Activated CD4-positive, alpha-beta T cell treated with anti-CD3 and anti-CD28 coated beads for 36 hours (primary cell): ENCODE measurements at regions of chr6 and their contacts with region 1.

Region 1: DNA sequence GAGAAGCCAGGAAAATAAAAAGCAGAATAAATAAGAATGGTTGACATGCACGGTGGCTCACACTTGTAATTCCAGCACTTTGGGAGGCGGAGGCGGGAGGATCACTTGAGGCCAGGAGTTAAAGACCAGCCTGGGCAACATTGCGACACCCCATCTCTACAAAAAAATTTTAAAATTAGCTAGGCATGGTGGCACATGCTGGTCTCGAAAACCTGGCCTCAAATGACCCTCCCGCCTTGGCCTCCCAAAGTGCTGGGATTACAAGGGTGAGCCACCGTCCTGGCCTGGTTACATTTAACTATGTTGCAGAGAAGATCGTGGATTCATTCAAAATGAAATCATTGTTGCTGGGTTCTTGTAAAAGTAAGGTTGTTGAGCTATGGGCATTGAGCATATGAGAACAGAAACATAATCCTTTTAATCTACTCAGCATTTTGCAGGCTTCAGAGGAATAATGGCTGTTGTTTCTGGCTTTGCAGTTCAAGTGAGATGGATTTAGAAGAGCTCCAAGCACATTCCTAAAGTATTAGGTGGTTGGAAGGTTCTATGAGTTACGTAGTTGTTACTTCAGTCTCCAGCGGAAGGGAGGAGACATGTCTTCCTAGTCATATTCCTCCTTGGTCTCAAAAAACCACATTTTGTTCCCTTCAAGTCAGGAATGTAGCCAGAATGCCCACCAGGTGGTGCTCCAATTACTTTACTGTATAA is 45.6 kb upstream of the RAB23 start:
- DNase-seq: peak; percentile 62
- ATAC-seq: peak; percentile 52
- H3K4me3 Mint-ChIP-seq: no peak overlapping the region
- H3K27ac Mint-ChIP-seq: no peak overlapping the region
- H3K4me1 Mint-ChIP-seq: peaks cover 27% of the 10 kb centered on the region
- H3K27me3 Mint-ChIP-seq: peaks cover 14% of the 10 kb centered on the region

Region 2: GRCh38 chr6:57021086-57021720 is 246.5 kb before region 1 on chr6:
- CTCF ChIA-PET with region 1: no interaction called
- POLR2A ChIA-PET with region 1: no interaction called
- intact Hi-C with region 1: no loop called
- DNase-seq: no peak
- ATAC-seq: peak; percentile 39
- H3K4me3 Mint-ChIP-seq: no peak overlapping the region
- H3K27ac Mint-ChIP-seq: no peak overlapping the region
- H3K4me1 Mint-ChIP-seq: no peaks in the 10 kb centered on the region
- H3K27me3 Mint-ChIP-seq: peaks cover 2% of the 10 kb centered on the region

Region 3: GRCh38 chr6:57089687-57090460 is 177.9 kb before region 1 on chr6 and contains the start of gene ZNF451:
- CTCF ChIA-PET with region 1: no interaction called
- POLR2A ChIA-PET with region 1: no interaction called
- intact Hi-C with region 1: no loop called
- DNase-seq: peak; percentile 98
- ATAC-seq: peak; percentile 95
- H3K4me3 Mint-ChIP-seq: peak within 1 kb of the TSS; percentile 73
- H3K27ac Mint-ChIP-seq: peak within 1 kb of the TSS; percentile 82
- H3K4me1 Mint-ChIP-seq: peaks cover 32% of the 10 kb centered on the region
- H3K27me3 Mint-ChIP-seq: no peaks in the 10 kb centered on the region
- total RNA-seq, gene ZNF451: 46.8 to 60.3 TPM

Region 4: DNA sequence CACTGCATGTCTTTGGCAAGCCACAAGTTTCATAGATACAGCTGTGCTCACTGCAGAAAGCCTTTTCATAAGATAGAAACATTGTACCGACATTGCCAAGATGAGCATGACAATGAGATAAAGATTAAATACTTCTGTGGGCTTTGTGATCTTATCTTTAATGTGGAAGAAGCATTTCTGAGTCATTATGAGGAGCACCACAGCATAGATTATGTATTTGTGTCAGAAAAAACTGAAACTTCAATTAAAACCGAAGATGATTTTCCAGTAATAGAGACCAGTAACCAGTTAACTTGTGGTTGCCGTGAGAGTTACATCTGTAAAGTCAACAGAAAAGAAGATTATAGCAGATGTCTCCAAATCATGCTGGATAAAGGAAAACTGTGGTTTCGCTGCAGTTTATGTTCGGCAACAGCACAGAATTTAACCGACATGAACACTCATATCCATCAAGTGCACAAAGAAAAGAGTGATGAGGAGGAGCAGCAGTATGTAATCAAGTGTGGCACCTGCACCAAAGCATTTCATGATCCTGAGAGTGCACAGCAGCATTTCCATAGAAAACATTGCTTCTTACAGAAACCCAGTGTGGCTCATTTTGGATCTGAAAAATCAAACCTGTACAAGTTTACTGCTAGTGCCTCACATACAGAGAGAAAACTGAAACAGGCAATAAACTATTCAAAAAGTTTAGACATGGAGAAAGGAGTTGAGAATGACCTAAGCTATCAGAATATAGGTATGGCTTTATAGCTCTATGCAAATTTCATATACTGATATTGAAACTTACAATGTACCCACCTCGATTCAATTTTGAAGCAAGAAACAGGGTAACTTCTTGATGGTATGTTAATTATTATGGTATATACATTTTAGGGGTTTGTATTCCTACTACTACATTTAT is 119.5 kb before region 1 on chr6:
- CTCF ChIA-PET with region 1: no interaction called
- POLR2A ChIA-PET with region 1: no interaction called
- intact Hi-C with region 1: loop called in 1 of 2 experiments (anchors 1 kb)
- DNase-seq: peak; percentile 10
- ATAC-seq: peak; percentile 74
- H3K4me3 Mint-ChIP-seq: no peak overlapping the region
- H3K27ac Mint-ChIP-seq: peak overlapping the region; percentile 77
- H3K4me1 Mint-ChIP-seq: peaks cover 31% of the 10 kb centered on the region
- H3K27me3 Mint-ChIP-seq: no peaks in the 10 kb centered on the region

Region 5: DNA sequence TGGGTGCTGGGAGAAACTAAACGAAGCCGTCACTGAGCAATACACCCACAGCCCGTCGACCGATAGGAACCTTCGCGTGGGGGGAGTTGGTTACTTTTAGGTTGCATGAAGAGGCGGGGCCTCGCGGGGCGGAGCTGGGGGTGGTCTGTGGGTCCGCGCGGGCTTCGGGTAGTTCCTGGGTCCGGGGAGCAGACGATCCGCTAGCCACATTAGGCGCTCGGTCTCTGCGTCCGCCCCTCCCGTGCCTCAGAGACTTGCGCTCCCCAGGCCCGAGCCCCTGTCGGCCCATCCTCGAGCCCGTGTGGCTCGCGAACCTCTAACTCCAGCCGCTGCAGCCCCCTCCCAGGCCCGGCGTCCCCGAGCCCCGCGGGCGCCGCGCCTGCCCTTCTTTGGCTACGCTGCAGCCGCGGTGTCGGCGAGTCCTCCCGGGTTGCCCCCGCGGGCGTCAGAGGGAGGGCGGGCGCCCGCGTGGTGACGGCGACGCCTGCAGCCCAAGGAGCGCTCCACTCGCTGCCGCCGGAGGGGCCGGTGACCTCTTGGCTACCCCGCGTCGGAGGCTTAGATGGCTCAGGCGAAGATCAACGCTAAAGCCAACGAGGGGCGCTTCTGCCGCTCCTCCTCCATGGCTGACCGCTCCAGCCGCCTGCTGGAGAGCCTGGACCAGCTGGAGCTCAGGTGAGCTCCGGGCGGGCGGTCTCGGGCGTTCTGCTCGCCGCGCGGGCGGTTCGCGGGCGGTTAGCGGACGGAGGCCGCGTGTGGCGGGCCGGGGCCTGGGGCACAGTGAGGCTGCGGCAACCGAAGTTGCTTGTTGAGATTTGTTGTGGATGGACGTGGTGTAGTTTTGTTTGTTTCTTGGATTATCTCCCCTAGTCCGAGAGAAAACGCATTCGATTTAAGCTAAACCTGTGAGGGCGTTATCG is 95.3 kb before region 1 on chr6 and contains the start of gene BAG2:
- CTCF ChIA-PET with region 1: interaction called, 4 read pairs
- POLR2A ChIA-PET with region 1: interaction called, 3 read pairs
- intact Hi-C with region 1: loop called in 1 of 2 experiments (anchors 1 kb)
- DNase-seq: peak; percentile 94
- ATAC-seq: peak; percentile 89
- H3K4me3 Mint-ChIP-seq: peak within 1 kb of the TSS; percentile 87
- H3K27ac Mint-ChIP-seq: peak within 1 kb of the TSS; percentile 96
- H3K4me1 Mint-ChIP-seq: peaks cover 35% of the 10 kb centered on the region
- H3K27me3 Mint-ChIP-seq: no peaks in the 10 kb centered on the region
- total RNA-seq, gene BAG2: 8.2 to 8.8 TPM

Region 6: DNA sequence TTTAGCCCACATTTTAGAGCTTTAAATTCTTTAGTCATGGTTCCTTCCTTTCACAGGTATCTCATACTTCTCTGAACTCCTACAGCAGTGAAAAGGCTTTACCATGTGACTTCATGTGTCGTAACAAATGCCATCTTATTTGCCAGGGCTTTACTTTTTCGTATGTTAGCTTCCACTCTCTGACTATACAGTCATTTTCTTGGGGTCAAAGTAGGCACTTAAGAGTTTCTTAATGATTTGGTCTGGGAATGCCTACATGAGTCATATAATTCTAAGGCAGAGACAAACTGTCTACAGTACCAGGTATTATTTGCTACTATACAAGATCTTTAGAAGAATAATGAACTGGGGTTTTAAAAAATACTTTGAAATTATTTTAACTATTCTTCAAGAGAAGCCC is 60.6 kb before region 1 on chr6:
- CTCF ChIA-PET with region 1: no interaction called
- POLR2A ChIA-PET with region 1: no interaction called
- intact Hi-C with region 1: loop called in 1 of 2 experiments (anchors 5 kb)
- DNase-seq: no peak
- ATAC-seq: peak; percentile 76
- H3K4me3 Mint-ChIP-seq: no peak overlapping the region
- H3K27ac Mint-ChIP-seq: no peak overlapping the region
- H3K4me1 Mint-ChIP-seq: peaks cover 21% of the 10 kb centered on the region
- H3K27me3 Mint-ChIP-seq: no peaks in the 10 kb centered on the region